ENCODE measurements at regions of chr20 and their contacts with region 1.

Region 1: GRCh38 chr20:61185841-61186601 is 66.0 kb upstream of the CDH4 start:
- DNase-seq: peak; percentile 86
- H3K4me3 ChIP-seq: no peak overlapping the region
- H3K27ac ChIP-seq: peak overlapping the region; percentile 86
- H3K4me1 ChIP-seq: peaks cover 42% of the 10 kb centered on the region
- H3K27me3 ChIP-seq: no peaks in the 10 kb centered on the region
- CTCF ChIP-seq: no peak

Region 2: DNA sequence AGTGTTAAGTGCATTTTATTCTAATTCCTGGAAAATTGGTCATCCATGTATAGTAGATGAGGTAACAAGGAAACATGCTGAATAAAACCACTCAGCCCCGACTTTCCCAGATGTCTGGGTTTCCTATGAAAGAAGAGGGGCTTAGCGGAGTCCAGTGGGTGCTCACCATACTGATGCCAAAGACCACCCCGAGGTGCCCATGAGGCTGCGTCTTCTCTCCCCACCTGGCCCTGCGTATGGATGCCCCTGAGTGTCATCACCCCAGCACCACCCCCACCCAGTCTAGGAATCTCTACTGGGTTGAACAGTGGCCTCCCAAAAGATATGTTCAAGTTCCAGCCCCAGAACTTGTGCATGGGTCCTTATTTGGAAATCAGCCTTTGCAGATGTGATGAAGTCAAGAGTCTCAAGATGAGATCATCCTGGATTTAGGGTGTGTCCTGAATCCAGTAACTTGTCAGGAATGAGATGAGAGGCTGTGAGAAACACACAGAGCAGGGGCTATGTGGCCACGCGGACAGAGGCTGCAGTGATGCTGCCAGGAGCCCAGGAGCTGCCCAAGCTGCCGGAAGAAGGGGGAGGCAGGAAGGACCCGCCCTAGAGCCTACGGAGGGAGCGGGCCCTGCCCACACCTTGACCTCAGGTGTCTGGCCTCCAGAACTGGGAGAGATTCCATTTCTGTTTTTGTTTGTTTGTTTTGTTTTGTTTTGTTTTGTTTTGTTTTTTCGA is 58.5 kb before region 1 on chr20:
- CTCF ChIA-PET with region 1: no interaction called
- dilution Hi-C with region 1: no loop called
- in situ Hi-C with region 1: no loop called
- intact Hi-C with region 1: loop called (anchors 1 kb)
- DNase-seq: peak; percentile 74
- H3K4me3 ChIP-seq: no peak overlapping the region
- H3K27ac ChIP-seq: no peak overlapping the region
- H3K4me1 ChIP-seq: no peaks in the 10 kb centered on the region
- H3K27me3 ChIP-seq: no peaks in the 10 kb centered on the region
- CTCF ChIP-seq: no peak

Region 3: GRCh38 chr20:61204206-61204605 is 18.2 kb after region 1 on chr20:
- CTCF ChIA-PET with region 1: interaction called, 15 read pairs
- dilution Hi-C with region 1: no loop called
- in situ Hi-C with region 1: no loop called
- intact Hi-C with region 1: no loop called
- DNase-seq: no peak
- H3K4me3 ChIP-seq: no peak overlapping the region
- H3K27ac ChIP-seq: no peak overlapping the region
- H3K4me1 ChIP-seq: no peaks in the 10 kb centered on the region
- H3K27me3 ChIP-seq: peaks cover 6% of the 10 kb centered on the region
- CTCF ChIP-seq: no peak

Measured in mammary epithelial cell (primary cell).